OCI-LY7 (cell line): ENCODE measurements at regions of chr22 and their contacts with region 1.

Region 1: DNA sequence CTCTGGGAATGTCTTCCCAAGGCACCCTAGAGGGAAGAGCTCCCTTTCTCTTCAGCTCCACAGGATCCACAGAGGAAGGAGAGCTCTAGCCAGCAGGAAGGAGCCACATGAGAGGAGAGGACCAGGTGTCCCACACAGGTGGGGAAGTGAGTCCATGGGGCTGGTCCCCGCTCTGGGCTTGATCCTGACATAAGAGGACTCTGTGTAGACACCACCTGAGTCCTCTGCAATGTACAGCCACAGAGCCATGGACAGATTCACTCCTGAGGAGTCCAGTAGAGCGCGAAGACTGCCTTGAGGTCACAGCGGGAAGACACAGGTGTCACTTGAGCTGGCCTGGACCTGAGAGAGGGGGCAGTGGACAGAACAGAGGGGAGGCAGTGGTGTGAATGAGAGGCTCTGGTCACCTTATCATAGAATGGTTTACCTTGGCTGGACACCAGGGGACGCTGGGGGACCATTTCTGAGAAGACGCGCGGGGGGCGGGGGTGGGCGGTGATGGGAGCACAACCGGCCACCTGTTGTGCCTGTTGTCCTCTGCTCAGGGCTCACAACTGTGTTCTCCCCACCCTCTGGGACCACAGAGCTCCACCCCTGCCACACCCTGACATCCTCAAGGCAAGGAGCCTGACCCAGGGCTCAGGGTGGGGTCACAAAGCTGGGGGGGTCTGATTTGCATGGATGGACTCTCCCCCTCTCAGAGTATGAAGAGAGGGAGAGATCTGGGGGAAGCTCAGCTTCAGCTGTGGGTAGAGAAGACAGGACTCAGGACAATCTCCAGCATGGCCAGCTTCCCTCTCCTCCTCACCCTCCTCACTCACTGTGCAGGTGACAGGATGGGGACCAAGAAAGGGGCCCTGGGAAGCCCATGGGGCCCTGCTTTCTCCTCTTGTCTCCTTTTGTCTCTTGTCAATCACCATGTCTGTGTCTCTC is 128.2 kb downstream of the ZNF280B start:
- DNase-seq: peak; percentile 95
- H3K4me3 ChIP-seq: peak overlapping the region; percentile 49
- H3K27ac ChIP-seq: peak overlapping the region; percentile 70
- H3K4me1 ChIP-seq: peaks cover 85% of the 10 kb centered on the region
- CTCF ChIP-seq: peak; percentile 80

Region 2: DNA sequence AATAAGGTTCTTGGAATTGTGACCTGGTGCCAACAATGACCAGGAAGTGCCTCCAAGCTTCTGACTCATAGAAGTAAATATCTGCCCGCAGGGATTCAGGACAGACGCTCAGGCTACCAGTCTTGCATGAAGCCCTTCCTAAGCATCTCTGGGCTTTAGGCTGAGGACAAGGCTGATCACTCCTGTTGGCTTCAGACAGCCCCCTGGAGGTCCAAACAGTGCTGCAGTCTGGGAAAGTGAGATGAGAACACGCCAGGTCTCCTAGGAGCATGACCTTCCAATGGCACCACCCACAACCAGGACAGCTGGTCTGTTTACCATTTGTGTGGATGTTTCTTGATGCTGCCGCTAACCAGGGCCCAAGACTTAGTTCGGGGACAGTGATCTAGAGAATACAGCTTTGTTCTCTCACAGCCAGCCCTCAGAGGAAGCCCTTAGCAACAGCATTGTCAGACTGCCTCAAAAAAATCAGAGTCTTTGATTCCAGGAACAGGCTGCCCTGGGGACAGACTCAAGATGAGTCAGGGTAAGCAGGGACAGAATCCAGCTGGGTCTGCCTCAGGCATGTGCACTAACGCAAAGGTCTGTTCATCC is 17.0 kb after region 1 on chr22:
- CTCF ChIA-PET with region 1: interaction called, 9 read pairs
- POLR2A ChIA-PET with region 1: interaction called, 40 read pairs
- intact Hi-C with region 1: loop called (anchors 1 kb)
- DNase-seq: peak; percentile 34
- H3K4me3 ChIP-seq: no peak overlapping the region
- H3K27ac ChIP-seq: no peak overlapping the region
- H3K4me1 ChIP-seq: peaks cover 71% of the 10 kb centered on the region
- CTCF ChIP-seq: peak; percentile 54

Region 3: DNA sequence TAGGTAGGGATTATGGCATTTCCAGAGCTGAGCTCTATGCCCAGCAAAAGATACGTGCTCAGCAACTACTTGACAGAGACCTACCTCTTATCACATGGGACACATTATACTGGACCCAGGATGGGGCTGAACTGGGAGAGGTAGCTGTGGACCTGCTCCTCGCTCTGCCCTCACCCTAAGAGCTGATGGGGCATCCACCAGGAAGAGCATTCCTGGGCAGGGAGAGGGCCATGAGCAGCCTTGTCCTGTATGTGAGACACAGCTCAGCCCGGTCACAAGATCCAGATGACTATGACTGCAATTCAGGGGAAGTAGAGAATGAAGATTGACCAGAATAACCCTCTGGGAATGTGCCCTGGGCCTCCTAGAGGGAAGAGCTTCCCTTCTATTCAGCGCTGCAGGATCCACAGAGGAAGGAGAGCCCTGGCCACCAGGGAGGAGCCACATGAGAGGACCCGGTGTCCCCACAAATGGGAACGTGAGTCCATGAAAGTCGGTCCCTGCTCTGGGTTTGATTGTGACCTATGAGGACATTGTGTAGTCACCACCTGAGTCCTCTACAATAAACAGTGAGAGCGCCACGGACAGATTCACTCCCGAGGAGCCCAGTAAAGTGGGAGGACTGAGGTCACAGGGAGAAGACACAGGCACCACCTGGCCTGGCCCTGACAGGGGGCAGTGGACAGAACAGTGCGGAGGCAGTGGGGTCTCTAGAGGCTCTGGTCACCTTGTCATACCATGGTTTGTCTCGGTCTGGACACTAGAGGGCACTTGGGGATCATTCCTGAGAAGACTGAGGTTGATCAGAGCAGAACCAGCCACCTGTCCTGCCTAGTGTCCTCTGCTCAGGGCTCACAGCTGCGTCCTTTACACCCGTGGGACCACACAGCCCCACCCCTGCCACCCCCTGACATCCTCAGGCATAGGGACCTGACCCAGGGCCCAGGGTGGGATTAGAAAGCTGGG is 28.6 kb after region 1 on chr22:
- CTCF ChIA-PET with region 1: interaction called, 6 read pairs
- POLR2A ChIA-PET with region 1: interaction called, 10 read pairs
- intact Hi-C with region 1: loop called (anchors 1 kb)
- DNase-seq: peak; percentile 87
- H3K4me3 ChIP-seq: no peak overlapping the region
- H3K27ac ChIP-seq: peak overlapping the region; percentile 59
- H3K4me1 ChIP-seq: peaks cover 64% of the 10 kb centered on the region
- CTCF ChIP-seq: peak; percentile 85

Region 4: DNA sequence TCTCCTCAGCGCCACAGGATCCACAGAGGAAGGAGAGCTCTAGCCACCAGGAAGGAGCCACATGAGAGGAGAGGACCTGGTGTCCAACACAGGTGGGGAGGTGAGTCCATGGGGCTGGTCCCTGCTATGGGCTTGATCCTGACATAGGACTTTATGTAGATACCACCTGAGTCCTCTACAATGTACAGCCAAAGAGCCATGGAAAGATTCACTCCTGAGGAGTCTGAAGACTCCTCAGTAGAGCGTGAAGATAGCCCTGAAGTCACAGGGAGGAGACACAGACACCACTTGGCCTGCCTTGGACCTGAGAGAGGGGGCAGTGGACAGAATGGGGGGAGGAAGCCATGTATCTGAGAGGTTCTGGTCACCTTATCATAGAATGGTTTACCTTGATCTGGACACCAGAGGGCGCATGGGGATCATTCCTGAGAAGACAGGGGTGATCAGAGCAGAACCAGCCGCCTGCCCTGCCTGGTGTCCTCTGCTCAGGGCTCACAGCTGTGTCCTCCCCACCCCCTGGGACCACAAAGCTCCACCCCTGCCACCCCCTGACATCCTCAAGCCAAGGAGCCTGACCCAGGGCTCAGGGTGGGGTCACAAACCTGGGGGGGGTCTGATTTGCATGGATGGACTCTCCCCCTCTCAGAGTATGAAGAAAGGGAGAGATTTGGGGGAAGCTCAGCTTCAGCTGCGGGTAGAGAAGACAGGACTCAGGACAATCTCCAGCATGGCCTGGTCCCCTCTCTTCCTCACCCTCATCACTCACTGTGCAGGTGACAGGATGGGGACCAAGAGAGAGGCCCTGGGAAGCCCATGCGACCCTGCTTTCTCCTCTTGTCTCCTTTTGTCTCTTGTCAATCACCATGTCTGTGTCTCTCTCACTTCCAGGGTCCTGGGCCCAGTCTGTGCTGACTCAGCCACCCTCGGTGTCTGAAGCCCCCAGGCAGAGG is 51.2 kb after region 1 on chr22:
- CTCF ChIA-PET with region 1: interaction called, 4 read pairs
- POLR2A ChIA-PET with region 1: interaction called, 7 read pairs
- intact Hi-C with region 1: loop called (anchors 1 kb)
- DNase-seq: peak; percentile 90
- H3K4me3 ChIP-seq: no peak overlapping the region
- H3K27ac ChIP-seq: no peak overlapping the region
- H3K4me1 ChIP-seq: peaks cover 54% of the 10 kb centered on the region
- CTCF ChIP-seq: peak; percentile 83

Region 5: GRCh38 chr22:22474733-22475132 is 94.4 kb after region 1 on chr22:
- CTCF ChIA-PET with region 1: no interaction called
- POLR2A ChIA-PET with region 1: no interaction called
- intact Hi-C with region 1: no loop called
- DNase-seq: no peak
- H3K4me3 ChIP-seq: no peak overlapping the region
- H3K27ac ChIP-seq: no peak overlapping the region
- H3K4me1 ChIP-seq: peaks cover 7% of the 10 kb centered on the region
- CTCF ChIP-seq: no peak

Region 6: GRCh38 chr22:22498267-22498666 is 117.9 kb after region 1 on chr22:
- CTCF ChIA-PET with region 1: no interaction called
- POLR2A ChIA-PET with region 1: no interaction called
- intact Hi-C with region 1: no loop called
- DNase-seq: no peak
- H3K4me3 ChIP-seq: no peak overlapping the region
- H3K27ac ChIP-seq: no peak overlapping the region
- H3K4me1 ChIP-seq: no peaks in the 10 kb centered on the region
- CTCF ChIP-seq: no peak

Region 7: DNA sequence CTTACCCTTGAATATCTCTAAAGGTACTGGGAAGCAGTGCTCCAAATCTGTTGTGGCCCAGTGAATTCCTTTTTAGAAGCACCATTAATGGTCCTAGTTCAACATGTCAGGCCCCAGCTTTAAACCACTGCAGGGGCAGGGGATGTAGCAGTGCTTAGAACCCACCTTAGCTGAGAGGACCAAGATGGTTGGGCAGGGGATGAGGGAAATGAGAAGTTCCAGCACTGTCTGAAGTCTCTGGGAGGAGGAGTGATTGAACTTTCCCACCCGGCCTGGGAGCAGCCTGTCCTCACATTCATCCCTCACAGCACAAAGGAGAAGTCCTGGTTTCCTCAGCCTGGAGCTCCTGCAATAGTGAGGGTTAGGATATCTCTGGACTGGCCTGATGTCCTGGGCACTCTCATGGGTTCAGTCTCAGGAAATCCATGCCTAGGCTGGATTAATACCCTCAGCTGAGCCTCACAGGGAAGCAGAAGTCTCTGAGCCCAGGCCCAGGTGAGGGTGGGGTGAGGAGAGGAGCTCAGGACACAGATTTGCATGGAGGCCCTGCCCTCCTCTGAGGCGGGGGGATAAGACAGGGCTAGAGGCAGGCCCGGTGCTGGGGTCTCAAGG is 207.3 kb after region 1 on chr22:
- CTCF ChIA-PET with region 1: no interaction called
- POLR2A ChIA-PET with region 1: interaction called, 3 read pairs
- intact Hi-C with region 1: loop called (anchors 5 kb)
- DNase-seq: no peak
- H3K4me3 ChIP-seq: no peak overlapping the region
- H3K27ac ChIP-seq: no peak overlapping the region
- H3K4me1 ChIP-seq: peaks cover 29% of the 10 kb centered on the region
- CTCF ChIP-seq: no peak

Region 8: GRCh38 chr22:22655452-22656290 is 275.3 kb after region 1 on chr22:
- CTCF ChIA-PET with region 1: no interaction called
- POLR2A ChIA-PET with region 1: no interaction called
- intact Hi-C with region 1: no loop called
- DNase-seq: no peak
- H3K4me3 ChIP-seq: no peak overlapping the region
- H3K27ac ChIP-seq: no peak overlapping the region
- H3K4me1 ChIP-seq: peaks cover 12% of the 10 kb centered on the region
- CTCF ChIP-seq: no peak